Left colon (tissue), 2 donors: ENCODE measurements at regions of chr19 and their contacts with region 1.

Region 1: GRCh38 chr19:48108997-48109782 is 1.4 kb downstream of the PLA2G4C start:
- DNase-seq: no peak
- ATAC-seq: no peak

Region 2: GRCh38 chr19:48152551-48152950 is 43.4 kb after region 1 on chr19:
- intact Hi-C with region 1: loop called in 1 of 2 experiments (anchors 5 kb)
- DNase-seq: peak; percentile 36 to 67
- ATAC-seq: no peak

Region 3: DNA sequence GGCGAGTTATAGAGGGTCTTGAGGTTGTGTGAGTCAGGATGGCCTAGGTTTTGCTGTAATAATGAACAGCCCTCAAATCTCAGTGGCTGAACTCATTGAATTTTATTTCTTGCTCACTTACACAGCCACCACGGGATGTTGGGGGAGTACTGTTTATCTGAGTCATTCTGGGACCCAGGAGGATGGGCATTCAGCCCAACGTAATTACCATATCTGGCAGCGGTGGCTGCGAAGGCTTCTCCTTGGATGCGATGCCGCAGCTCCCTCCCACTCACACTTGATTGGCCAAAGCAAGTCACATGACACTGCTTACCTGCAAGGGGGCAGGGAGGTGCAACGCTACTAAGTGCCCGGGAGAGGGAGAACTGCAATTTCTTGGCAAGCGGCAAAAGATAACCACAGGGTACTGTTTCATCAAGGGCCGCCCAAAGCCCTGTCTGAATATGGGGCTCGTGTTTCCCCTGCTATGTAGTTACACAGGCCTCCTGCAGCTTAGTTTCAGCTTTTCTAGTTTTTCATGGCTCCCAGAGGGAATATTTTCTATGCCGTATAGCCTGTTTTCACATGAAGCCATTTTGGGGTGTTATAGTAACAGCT is 81.2 kb after region 1 on chr19:
- intact Hi-C with region 1: no loop called
- DNase-seq: no peak
- ATAC-seq: no peak